Activated B cell treated with CpG ODN at 0.5 μM for 24 hours (primary cell): ENCODE measurements at regions of chr17 and their contacts with region 1.

Region 1: DNA sequence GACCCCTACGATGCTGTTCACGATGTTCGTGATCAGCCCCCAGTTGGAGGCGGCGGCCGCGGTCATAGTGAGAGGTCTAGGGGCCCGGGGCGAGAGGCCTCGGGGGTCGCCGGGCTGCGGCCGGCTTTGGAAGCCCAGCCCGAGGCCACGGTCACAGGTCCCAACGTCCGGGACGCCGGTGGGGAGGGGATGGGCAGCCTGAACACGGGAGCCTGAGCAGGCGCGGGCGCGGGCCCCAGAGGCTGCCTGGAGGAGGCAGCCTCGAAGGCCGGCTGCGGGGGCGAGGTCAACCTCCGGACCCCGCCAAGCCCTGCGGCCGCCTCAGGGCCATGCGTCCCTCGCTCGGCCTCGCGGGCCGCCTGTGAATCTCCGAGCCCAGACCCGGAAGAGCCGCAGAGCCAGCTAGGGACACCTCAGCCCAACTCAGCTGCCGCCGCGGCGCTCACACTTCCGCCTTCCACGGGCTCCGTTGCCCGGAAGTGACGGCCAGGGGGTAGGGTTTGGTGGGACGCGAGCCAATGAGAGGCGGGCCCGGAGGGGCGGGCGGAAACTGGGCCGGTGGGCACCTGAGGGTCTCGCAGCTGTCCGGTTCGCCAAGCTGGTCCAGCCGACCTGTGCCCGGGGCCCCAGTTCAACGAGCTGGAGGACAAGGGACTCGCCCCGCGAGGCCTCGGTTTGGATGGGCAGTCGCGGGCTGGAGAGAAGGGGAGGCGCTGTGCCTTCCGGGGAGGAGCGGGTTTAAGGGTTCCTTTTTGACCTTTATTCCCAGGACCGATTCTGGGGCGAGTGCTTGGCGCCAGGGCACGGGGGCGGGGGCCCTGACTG is at the start of gene SLC38A10:
- DNase-seq: peak; percentile 92
- ATAC-seq: peak; percentile 86
- H3K4me3 Mint-ChIP-seq: peak within 1 kb of the TSS; percentile 95
- H3K27ac Mint-ChIP-seq: peak within 1 kb of the TSS; percentile 92
- H3K4me1 Mint-ChIP-seq: peaks cover 39% of the 10 kb centered on the region
- H3K27me3 Mint-ChIP-seq: no peaks in the 10 kb centered on the region
- CTCF ChIP-seq: no peak
- total RNA-seq, gene SLC38A10: 75.9 and 97.1 TPM in 2 replicates

Region 2: DNA sequence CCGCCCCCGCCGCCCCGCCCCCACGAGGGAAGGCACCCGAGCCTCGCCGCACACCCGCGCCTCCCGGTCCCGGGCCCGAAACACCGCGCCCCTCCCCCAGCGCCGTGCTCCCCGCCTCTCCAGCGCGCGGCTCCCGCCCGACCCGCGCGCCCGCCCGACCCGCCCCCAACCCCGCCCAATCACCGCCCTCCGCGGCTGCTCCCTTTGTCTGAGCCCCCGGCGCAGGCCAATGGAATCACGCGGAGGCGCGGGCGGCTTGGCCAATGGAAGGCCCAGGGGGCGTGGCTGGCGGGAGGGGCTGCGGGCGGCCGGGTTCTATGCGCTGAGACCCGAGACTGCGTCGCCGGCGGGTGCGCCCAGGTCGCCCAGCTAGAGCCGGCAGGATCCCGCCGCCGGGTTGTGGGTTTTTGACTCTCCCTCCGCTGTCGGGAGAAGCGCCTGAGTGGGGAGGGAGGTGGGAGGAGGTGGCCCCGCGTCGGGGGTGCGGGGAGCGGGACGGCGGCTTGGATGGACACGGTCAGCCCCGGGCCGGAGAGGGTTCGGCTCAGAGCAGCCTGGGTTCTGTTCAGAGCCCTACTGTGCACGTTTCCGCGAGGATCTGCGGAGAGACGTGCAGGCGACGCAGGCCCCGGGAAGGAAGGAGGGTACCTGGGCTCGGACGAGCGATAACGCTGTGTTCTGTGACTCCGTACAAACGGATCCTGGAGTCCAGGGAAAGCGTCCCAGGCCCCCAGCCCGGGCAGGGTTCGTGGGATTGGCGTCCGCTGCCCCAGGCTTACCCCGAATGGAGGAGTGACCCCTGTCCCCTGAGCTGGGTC is 51.2 kb after region 1 on chr17:
- CTCF ChIA-PET with region 1: no interaction called
- POLR2A ChIA-PET with region 1: interaction called, 6 read pairs
- intact Hi-C with region 1: loop called (anchors 1 kb)
- DNase-seq: peak; percentile 87
- ATAC-seq: peak; percentile 96
- H3K4me3 Mint-ChIP-seq: peak overlapping the region; percentile 74
- H3K27ac Mint-ChIP-seq: no peak overlapping the region
- H3K4me1 Mint-ChIP-seq: peaks cover 20% of the 10 kb centered on the region
- H3K27me3 Mint-ChIP-seq: peaks cover 24% of the 10 kb centered on the region
- CTCF ChIP-seq: no peak

Region 3: DNA sequence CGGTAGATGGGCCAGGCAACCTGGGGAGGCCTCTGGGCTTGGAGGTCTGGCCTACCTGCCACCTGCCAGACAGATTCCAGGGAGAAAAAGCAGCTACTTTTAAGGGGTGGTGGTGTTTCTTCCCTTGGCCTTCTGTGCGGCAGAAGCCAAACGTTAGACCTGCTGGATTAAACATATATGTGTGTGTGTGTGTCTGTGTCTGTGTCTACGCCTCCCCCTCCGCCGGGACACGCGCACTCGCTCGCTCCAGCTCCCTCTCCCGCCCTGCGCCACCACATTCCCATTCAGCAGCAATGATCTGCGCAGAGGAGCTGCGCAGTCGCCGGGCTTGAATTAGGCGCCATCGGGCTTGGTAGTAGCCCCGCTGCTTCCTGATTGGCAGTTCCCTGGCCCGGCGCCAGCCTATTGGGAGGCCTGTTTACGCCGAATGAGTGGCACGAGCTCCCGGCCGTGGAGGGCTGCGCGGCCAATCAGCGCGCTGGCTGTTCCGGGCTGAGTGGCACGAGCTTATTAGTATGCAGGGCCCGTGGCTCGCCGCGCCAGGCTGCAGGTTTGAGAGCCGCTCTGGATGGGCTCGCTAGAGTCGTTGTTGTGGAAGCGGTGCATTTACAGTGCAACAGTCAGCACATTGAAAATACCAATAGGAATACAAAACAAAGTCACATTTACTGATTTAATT is 100.0 kb after region 1 on chr17 and contains the start of gene BAHCC1:
- CTCF ChIA-PET with region 1: interaction called, 5 read pairs
- POLR2A ChIA-PET with region 1: no interaction called
- intact Hi-C with region 1: loop called (anchors 2 kb)
- DNase-seq: peak; percentile 70
- ATAC-seq: peak; percentile 92
- H3K4me3 Mint-ChIP-seq: peak within 1 kb of the TSS; percentile 75
- H3K27ac Mint-ChIP-seq: peak within 1 kb of the TSS; percentile 76
- H3K4me1 Mint-ChIP-seq: peaks cover 26% of the 10 kb centered on the region
- H3K27me3 Mint-ChIP-seq: peaks cover 41% of the 10 kb centered on the region
- CTCF ChIP-seq: no peak
- total RNA-seq, gene BAHCC1: 0.13 and 0.42 TPM in 2 replicates

Region 4: DNA sequence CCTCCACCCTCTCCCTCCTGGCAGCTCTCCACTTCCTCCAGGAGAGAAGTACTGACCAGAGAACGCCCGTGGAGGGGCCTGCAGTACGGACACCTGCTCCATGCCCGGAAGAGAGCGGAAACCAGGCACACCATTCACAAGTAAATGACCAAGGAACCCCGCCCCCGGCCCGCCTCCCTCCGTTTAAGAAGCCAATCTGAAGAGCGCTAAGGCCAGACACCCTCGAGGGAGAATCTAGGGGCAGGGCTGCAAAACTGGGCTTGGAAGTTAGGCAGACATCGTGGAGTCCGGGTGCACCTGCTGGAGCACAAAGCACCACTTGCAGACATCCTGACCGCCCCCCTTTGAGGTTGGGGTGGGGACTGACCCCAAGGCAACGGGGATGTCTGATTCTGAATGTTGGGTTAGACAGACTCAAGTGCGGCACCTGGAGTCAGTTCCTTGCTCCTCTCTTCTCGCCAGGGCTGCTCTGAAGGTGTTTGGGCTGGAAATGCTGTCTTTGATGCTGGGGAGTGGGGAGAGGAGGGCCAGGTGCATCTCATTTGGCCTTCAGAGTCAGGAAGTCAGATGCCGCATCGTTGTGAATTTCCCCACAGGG is 258.0 kb after region 1 on chr17:
- CTCF ChIA-PET with region 1: interaction called, 4 read pairs
- POLR2A ChIA-PET with region 1: interaction called, 6 read pairs
- intact Hi-C with region 1: loop called (anchors 5 kb)
- DNase-seq: no peak
- ATAC-seq: peak; percentile 71
- H3K4me3 Mint-ChIP-seq: peak overlapping the region; percentile 91
- H3K27ac Mint-ChIP-seq: peak overlapping the region; percentile 92
- H3K4me1 Mint-ChIP-seq: peaks cover 45% of the 10 kb centered on the region
- H3K27me3 Mint-ChIP-seq: no peaks in the 10 kb centered on the region
- CTCF ChIP-seq: no peak

Region 5: DNA sequence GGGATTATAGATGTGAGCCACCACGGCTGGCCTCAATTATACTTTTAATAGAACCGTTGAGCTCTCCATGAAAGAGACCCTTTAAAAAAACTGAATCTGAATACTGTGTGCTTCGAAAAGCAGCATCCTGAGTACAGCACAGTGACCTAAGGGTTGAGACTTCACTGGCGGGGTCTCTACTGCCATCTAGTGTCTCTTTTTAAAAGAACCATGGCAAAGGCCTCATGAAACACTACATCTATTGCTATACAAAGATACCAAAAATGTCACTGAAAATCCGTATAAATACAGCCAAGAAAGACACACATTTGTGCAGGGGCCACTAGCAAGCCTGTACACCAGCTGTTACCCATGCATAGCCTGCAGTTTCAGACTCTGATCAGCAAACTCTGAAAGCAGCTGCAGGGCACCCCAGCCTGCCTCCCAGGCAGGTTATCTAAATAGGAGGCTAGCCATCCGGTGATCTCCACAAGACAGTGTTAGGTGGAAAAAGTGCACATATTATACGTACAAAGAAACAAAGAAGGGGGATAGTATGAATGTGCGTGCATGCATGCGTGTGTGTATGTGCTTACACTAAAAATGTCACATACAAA is 306.6 kb after region 1 on chr17:
- CTCF ChIA-PET with region 1: interaction called, 13 read pairs
- POLR2A ChIA-PET with region 1: interaction called, 4 read pairs
- intact Hi-C with region 1: loop called (anchors 5 kb)
- DNase-seq: no peak
- ATAC-seq: peak; percentile 63
- H3K4me3 Mint-ChIP-seq: no peak overlapping the region
- H3K27ac Mint-ChIP-seq: peak overlapping the region; percentile 57
- H3K4me1 Mint-ChIP-seq: peaks cover 46% of the 10 kb centered on the region
- H3K27me3 Mint-ChIP-seq: no peaks in the 10 kb centered on the region
- CTCF ChIP-seq: peak; percentile 19